Cardiac septum (tissue), 1 donor: ENCODE measurements at regions of chr3 and their contacts with region 1.

Region 1: DNA sequence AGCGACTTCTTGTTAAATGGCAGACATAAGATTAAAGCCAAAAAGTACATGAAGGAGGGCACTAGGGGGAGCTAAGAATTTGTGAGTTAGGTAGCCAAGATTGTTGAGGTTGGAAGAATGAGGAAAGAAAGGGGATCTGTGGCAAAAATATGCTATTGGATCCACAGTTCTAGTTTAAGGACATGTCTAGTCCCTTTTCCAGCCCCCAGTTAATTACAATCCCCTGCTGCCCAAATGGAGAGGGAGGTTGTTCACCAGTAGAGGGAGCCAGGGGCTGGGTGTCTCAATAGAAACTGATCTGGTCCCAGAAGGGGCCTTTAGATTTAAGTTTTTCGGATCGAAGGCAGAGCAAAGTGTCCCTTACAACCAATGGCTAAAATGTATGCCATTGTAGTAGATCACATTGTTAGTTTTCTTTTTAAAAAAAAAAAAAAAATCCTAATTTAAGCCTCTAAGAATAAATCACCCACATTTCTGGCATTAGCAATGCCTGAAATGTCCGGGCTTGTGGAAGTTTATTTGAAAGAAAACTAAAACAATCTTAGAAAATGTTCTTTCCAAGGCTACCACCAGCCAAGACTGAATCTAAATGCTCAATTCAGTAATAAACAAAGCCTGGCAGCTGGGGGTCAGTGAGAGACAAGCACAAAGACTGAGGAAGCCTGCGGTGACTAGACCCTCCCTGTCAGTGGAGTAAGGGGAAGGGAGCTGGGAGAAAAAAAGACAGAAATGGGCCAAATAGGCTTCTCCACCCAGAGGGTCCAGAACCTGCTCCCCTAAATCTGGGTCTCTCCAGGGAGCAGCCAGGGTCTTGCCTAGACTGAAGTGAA is 7.1 kb downstream of the COL8A1 start:
- DNase-seq: no peak

Region 2: GRCh38 chr3:99071096-99071495 is 574.4 kb before region 1 on chr3:
- intact Hi-C with region 1: no loop called
- DNase-seq: no peak

Region 3: DNA sequence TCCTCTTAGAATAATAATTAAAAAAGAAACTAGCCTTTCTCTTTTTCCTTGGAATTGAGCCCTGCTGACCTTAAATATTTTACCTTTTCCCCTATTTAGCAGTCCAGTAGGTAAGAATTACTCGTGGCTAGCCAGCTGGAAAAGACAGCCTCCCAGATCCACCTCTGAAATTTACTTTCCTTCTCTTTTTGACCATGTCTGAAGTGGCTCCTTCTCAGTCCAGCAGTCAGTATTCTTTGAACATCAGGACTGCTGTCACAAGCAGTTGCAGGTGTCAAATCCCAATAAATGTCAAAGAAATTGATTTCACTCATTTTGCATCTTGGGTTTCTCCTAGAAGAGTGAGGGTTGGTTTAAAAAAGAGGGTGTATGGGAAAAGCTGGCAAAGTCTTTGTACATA is 432.5 kb before region 1 on chr3:
- intact Hi-C with region 1: no loop called
- DNase-seq: no peak

Region 4: GRCh38 chr3:99544786-99545281 is 100.7 kb before region 1 on chr3:
- intact Hi-C with region 1: loop called (anchors 5 kb)
- DNase-seq: no peak

Region 5: DNA sequence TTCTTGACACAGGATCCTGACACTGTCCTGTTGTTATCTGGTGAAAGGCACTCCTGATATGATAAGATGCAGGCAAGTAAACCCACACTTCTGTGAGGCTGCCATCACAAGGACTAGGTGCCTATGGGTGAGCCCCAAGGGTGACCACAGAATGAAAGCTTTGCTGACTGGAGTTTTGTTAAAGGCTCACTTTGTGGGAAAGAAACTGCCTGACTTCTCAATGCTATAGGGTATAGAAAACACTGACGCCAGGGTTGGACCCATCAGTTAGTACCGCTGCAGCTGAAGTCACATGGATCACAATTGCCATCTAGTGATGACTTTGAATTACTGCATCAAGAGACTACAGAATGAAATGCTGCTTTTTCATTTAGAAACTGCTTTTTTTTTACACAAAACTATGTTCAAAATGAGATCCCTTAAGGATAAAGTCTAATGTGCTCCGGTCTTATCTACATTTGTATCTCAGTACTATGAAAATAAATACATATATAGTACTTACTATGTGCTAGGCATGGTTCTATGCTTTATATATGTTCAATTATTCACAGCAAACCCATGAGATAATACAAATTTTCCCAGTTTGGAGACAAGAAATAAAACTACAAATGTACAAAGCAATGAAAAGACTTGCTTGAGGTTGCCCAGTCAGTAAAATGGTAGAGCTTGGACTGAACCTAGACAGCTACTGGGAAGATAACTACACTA is 107.9 kb after region 1 on chr3:
- intact Hi-C with region 1: loop called (anchors 5 kb)
- DNase-seq: no peak

Region 6: DNA sequence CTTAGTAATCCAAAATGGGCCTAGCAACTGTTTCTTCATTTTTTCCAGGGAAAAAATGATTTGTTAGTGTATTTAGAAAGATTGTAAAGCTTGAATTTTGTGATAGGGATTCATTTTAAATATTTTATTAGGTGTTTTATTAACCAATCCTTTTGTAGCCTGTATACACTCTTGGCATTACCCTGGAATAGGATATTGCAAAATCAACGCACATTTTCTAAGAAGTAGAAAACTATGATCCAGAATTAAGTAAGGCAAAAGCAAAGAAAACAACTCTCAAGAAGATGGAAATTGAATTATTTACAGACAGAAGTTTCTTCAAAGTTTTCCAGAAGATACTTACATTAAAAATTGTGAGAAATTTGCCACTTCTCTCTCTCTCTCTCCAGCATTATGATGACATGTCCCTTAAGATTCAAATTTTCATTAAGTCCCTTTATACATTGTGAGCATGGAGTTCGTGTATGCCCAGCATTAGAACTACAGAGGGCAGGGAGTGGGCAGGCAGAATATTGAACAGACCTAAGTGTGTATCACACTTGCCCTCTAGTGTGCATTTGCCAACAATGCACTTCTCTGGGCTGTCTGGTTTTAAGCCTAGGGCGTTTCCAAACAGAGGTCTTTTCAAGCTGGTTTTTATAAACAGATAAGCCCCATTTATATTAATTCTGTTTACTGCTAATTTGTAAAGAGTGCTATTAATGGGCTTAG is 143.7 kb after region 1 on chr3:
- intact Hi-C with region 1: loop called (anchors 5 kb)
- DNase-seq: no peak

Region 7: GRCh38 chr3:99850608-99851007 is 205.1 kb after region 1 on chr3:
- intact Hi-C with region 1: no loop called
- DNase-seq: no peak